PC-9 (cell line): ENCODE measurements at regions of chr20 and their contacts with region 1.

Region 1: GRCh38 chr20:35568645-35569262 is 26.9 kb downstream of the ERGIC3 start:
- DNase-seq: peak; percentile 26 to 55
- H3K4me3 ChIP-seq: no peak overlapping the region
- H3K27ac ChIP-seq: no peak overlapping the region
- H3K4me1 ChIP-seq: no peaks in the 10 kb centered on the region
- H3K27me3 ChIP-seq: no peaks in the 10 kb centered on the region
- CTCF ChIP-seq: peak; percentile 56

Region 2: GRCh38 chr20:35601008-35601973 is 32.5 kb after region 1 on chr20:
- CTCF ChIA-PET with region 1: no interaction called
- POLR2A ChIA-PET with region 1: interaction called, 21 read pairs
- intact Hi-C with region 1: no loop called
- DNase-seq: no peak
- H3K4me3 ChIP-seq: no peak overlapping the region
- H3K27ac ChIP-seq: no peak overlapping the region
- H3K4me1 ChIP-seq: peaks cover 11% of the 10 kb centered on the region
- H3K27me3 ChIP-seq: no peaks in the 10 kb centered on the region
- CTCF ChIP-seq: no peak

Region 3: GRCh38 chr20:35664544-35665221 is 95.9 kb after region 1 on chr20 and contains the starts of genes CPNE1 and RBM12:
- CTCF ChIA-PET with region 1: no interaction called
- POLR2A ChIA-PET with region 1: no interaction called
- intact Hi-C with region 1: loop called (anchors 5 kb)
- DNase-seq: peak; percentile 80 to 94
- H3K4me3 ChIP-seq: peak within 1 kb of the TSS; percentile 99
- H3K27ac ChIP-seq: peak within 1 kb of the TSS; percentile 86
- H3K4me1 ChIP-seq: peaks cover 37% of the 10 kb centered on the region
- H3K27me3 ChIP-seq: no peaks in the 10 kb centered on the region
- CTCF ChIP-seq: no peak
- total RNA-seq, gene CPNE1: 271 and 311 TPM in 2 replicates
- total RNA-seq, gene RBM12: 46.9 and 81.2 TPM in 2 replicates

Region 4: DNA sequence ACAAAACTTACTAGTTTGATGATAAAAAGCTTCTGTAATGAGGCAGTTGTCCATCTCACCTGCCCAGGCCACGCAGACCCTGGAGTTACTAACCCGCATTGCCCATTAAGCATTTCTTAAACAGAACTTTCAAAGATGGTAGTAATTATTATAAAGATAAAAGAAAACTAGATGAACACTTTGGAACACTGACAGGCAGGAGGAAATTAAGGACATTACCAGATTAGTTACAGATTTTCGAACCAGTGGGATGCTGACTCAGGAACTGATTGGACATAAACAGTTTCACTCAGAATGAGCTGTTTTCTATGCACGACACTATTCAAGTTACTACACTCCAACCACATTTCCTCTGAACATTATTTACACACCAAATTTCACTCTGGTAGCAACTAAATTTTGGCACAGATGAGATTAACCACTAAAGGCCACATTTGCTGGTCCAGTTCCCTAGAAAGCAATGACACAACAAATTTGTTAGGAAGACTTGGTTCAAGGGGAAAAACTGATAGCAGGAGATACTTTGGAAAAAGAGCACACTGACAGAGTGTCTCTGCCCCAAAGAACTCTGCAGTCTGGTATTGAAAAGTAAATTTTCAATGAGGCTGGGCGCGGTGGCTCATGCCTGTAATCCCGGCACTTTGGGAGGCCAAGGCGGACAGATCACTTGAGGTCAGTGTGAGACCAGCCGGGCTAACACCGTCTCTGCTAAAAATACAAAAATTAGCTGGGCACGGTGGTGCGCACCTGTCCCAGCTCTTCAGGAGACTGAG is 133.5 kb after region 1 on chr20:
- CTCF ChIA-PET with region 1: no interaction called
- POLR2A ChIA-PET with region 1: no interaction called
- intact Hi-C with region 1: no loop called
- DNase-seq: no peak
- H3K4me3 ChIP-seq: no peak overlapping the region
- H3K27ac ChIP-seq: peak overlapping the region; percentile 36
- H3K4me1 ChIP-seq: peaks cover 25% of the 10 kb centered on the region
- H3K27me3 ChIP-seq: no peaks in the 10 kb centered on the region
- CTCF ChIP-seq: no peak